Aorta (tissue), 5 donors: ENCODE measurements at regions of chr6 and their contacts with region 1.

Region 1: DNA sequence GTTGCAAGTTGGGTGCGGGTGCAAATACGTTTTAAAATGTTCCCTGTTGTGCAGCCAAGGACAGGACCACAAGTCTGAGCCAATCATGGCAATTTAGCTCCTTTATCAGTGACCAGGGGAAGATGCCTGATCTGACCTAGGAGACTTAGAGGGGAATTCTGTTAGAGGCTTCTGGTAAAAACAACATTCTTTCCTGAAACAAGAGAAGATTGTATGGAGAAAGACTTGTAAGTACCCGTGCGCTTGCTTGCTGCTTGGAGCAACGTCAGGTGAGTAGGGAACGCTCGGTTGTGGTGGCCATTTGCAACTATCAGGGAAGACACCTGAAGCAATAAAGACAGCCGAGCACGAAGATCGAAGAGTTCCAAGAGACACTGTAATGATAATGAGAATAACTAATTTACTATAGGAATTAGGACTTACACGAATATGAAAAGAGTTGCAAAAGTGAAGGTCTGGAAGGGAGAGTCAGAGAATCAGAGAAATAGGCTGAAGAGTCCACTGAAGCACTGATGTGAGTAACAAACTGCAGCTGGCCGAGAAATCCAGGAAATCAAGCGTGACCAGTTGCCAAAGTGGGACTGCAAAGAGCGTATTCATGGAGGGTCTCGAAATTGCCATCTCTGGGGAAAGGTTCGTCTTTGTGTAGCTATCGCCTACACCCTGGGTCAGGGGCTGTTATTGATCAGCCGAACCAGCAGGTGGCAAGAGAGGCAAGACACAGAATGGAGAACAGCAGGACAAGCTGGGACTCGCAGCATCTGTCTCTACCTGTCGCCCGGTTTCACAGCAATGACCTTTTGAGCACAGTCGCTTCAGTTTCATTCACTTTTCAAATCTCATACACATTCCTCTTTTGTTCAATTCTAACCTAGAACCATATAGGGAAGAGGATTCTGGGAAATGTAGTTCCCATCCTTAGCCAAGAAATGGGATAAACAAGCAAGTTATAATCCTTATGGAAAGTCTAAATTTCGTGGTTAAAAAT is 26.1 kb downstream of the LOC128125822 start:
- DNase-seq: peak in 1 of 2 donors; percentile 72
- ATAC-seq: peak; percentile 91
- H3K4me3 ChIP-seq: peak overlapping the region; percentile 33 to 56
- H3K27ac ChIP-seq: no peak overlapping the region
- H3K4me1 ChIP-seq: no peaks in the 10 kb centered on the region
- H3K27me3 ChIP-seq: no peaks in the 10 kb centered on the region

Region 2: DNA sequence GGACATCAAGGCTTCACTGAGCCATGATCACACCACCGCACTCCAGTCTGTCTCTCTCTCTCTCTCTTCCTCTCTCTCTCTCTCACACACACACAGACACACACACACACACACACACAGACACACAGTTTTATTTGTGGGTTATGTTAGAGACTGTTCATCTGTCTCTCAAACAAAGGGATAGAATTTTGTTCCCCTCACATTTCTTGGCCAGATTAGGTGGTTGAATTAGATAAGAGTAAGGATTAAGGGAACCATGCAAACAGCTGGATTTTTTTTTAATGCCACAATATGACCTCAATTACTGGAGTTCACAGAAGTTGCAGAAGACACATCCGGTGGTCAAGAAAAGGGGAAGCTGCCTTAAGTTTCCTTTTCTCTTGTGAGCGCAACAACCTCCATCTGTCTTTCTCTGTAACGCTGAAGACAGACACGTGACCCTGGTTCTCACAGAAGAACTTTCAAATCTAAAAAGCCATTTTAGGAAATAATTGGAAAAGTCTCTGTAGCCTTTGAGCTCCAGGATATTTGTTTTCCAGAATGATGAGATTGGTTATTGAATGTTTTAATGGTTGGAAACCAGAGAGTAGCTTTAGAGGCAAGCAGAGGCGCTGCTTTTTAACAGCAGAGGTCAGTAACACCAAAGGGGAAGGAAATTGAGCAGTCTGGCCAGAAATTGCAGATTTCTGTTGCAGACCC is 245.6 kb before region 1 on chr6:
- intact Hi-C with region 1: loop called in 1 of 2 experiments (anchors 5 kb)
- DNase-seq: peak in 1 of 2 donors; percentile 50
- ATAC-seq: peak; percentile 59
- H3K4me3 ChIP-seq: no peak overlapping the region
- H3K27ac ChIP-seq: no peak overlapping the region
- H3K4me1 ChIP-seq: peaks cover 0 to 2% of the 10 kb centered on the region in 2 donors
- H3K27me3 ChIP-seq: no peaks in the 10 kb centered on the region

Region 3: GRCh38 chr6:63764318-63764916 is 166.1 kb after region 1 on chr6:
- intact Hi-C with region 1: loop called (anchors 2 to 5 kb)
- DNase-seq: no peak
- ATAC-seq: no peak
- H3K4me3 ChIP-seq: no peak overlapping the region
- H3K27ac ChIP-seq: no peak overlapping the region
- H3K4me1 ChIP-seq: no peaks in the 10 kb centered on the region
- H3K27me3 ChIP-seq: no peaks in the 10 kb centered on the region

Region 4: DNA sequence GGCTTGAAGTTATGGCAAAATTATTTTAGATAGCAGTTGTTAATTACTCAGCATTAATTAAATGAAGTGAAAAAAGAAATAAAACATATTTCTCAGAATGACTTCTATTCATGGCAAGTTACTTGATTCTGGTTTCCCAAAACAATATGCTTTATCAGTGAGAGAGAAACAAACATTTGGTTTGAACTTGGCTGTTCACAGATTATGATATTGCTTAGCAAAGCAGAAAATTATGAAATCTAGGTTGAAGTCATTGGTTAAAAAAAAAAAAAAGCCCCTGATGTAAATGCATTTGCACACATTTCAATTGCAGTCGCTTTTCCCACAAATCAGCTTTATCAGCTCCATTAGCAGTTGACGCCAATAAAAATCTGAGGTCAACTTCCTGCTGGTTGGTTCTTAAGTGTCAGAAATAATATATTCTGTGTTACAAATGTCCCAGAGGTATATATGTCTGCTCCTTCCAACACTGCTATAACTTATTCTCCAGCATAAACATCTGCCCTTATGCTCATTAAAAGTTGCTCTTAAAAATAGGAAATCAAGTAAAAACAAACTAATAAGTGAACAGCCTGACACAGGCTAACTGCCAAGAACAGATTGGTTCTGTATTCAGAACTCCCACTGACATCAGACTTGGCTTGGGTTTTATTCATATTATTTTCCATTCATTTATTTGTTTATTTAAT is 312.7 kb after region 1 on chr6:
- intact Hi-C with region 1: no loop called
- DNase-seq: no peak
- ATAC-seq: peak; percentile 65
- H3K4me3 ChIP-seq: no peak overlapping the region
- H3K27ac ChIP-seq: no peak overlapping the region
- H3K4me1 ChIP-seq: no peaks in the 10 kb centered on the region
- H3K27me3 ChIP-seq: no peaks in the 10 kb centered on the region